ENCODE measurements at regions of chr1 and their contacts with region 1.

Region 1: GRCh38 chr1:17265162-17265561 is 16.3 kb downstream of the PADI3 start:
- DNase-seq: peak; percentile 69
- H3K4me3 ChIP-seq: no peak overlapping the region
- H3K27ac ChIP-seq: peak overlapping the region; percentile 34
- H3K4me1 ChIP-seq: peaks cover 33% of the 10 kb centered on the region
- H3K27me3 ChIP-seq: no peaks in the 10 kb centered on the region
- CTCF ChIP-seq: peak; percentile 3 to 37

Region 2: GRCh38 chr1:17250601-17251000 is 14.6 kb before region 1 on chr1:
- CTCF ChIA-PET with region 1: interaction called, 4 read pairs
- dilution Hi-C with region 1: no loop called
- in situ Hi-C with region 1: no loop called
- intact Hi-C with region 1: loop called (anchors 2 kb)
- DNase-seq: peak; percentile 89
- H3K4me3 ChIP-seq: no peak overlapping the region
- H3K27ac ChIP-seq: peak overlapping the region; percentile 26
- H3K4me1 ChIP-seq: peaks cover 42% of the 10 kb centered on the region
- H3K27me3 ChIP-seq: no peaks in the 10 kb centered on the region
- CTCF ChIP-seq: no peak

Measured in mammary epithelial cell (primary cell).